ENCODE measurements at regions of chr16 and their contacts with region 1.

Region 1: GRCh38 chr16:57591086-57591869 is 37.2 kb upstream of the ADGRG1 start:
- DNase-seq: peak; percentile 30 to 72 (median 48)
- ATAC-seq: peak; percentile 70
- H3K4me3 ChIP-seq: peak overlapping the region; percentile 25
- H3K4me3 Mint-ChIP-seq: peak overlapping the region; percentile 9 to 83 (median 69)
- H3K27ac ChIP-seq: no peak overlapping the region
- H3K27ac Mint-ChIP-seq: peak overlapping the region; percentile 17 to 92 (median 75)
- H3K4me1 ChIP-seq: peaks cover 27 to 47% of the 10 kb centered on the region in 2 donors
- H3K4me1 Mint-ChIP-seq: peaks cover 26 to 43% (median 38%) of the 10 kb centered on the region in 7 donors
- H3K27me3 ChIP-seq: no peaks in the 10 kb centered on the region
- H3K27me3 Mint-ChIP-seq: peaks cover 0 to 2% (median 0%) of the 10 kb centered on the region in 5 donors

Region 2: GRCh38 chr16:57386381-57386951 is 204.8 kb before region 1 on chr16:
- CTCF ChIA-PET with region 1: no interaction called
- POLR2A ChIA-PET with region 1: no interaction called
- intact Hi-C with region 1: no loop called
- DNase-seq: no peak
- ATAC-seq: no peak
- H3K4me3 ChIP-seq: no peak overlapping the region
- H3K4me3 Mint-ChIP-seq: no peak overlapping the region
- H3K27ac ChIP-seq: no peak overlapping the region
- H3K27ac Mint-ChIP-seq: no peak overlapping the region
- H3K4me1 ChIP-seq: no peaks in the 10 kb centered on the region
- H3K4me1 Mint-ChIP-seq: peaks cover 0 to 5% (median 0%) of the 10 kb centered on the region in 7 donors
- H3K27me3 ChIP-seq: no peaks in the 10 kb centered on the region
- H3K27me3 Mint-ChIP-seq: peaks cover 0 to 4% (median 0%) of the 10 kb centered on the region in 5 donors

Region 3: DNA sequence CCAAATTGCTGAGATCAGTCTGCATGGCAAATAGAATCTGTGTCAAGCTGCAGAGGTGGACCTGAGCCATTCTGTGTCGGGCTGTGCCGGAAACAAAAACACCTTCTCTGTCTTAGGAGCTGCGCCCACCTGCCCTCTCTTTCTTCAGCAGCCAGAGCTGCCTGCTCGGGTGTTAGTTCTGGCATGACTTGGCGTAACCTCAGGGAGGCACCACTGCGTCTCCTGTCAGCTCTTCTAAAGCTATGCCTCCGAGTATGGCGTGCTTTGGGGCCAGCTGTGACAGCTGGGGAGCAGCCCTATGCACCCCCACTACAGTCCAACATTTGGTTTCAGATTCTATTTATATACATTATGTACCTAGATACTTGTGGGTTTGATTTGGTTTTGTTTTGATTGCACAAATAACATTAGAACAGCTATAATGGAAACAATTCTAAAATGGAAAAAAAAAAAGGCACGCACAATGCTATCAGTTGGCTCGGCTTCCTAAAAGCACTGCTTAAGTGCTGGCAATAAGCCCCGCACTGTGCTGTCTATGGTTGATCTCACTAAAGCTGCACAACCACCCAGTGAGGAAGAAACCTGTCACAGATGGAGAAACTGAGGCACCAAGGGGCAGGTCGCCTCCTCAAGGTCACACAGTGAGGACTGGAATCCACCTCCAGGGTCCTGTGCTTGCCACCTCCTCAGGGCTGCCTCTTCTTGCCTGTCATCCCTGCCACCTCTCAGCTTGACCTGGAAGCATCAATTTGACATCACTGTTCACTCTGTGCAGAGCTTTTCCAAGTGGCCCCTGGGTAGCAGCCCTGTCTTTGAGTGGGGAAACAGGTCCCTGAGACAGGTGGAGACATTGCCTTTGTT is 18.5 kb after region 1 on chr16:
- CTCF ChIA-PET with region 1: interaction called, 3 read pairs
- POLR2A ChIA-PET with region 1: interaction called, 3 read pairs
- intact Hi-C with region 1: loop called (anchors 1 to 2 kb)
- DNase-seq: peak in 7 of 9 donors; percentile 29 to 74 (median 35)
- ATAC-seq: peak; percentile 91
- H3K4me3 ChIP-seq: peak overlapping the region; percentile 38
- H3K4me3 Mint-ChIP-seq: peak overlapping the region; percentile 38 to 84 (median 62)
- H3K27ac ChIP-seq: no peak overlapping the region
- H3K27ac Mint-ChIP-seq: peak overlapping the region in 8 of 9 donors; percentile 20 to 91 (median 52)
- H3K4me1 ChIP-seq: peaks cover 10 to 42% of the 10 kb centered on the region in 2 donors
- H3K4me1 Mint-ChIP-seq: peaks cover 11 to 47% (median 13%) of the 10 kb centered on the region in 7 donors
- H3K27me3 ChIP-seq: no peaks in the 10 kb centered on the region
- H3K27me3 Mint-ChIP-seq: no peaks in the 10 kb centered on the region

Region 4: GRCh38 chr16:57648590-57649442 is 57.5 kb after region 1 on chr16:
- CTCF ChIA-PET with region 1: interaction called, 53 read pairs
- POLR2A ChIA-PET with region 1: no interaction called
- intact Hi-C with region 1: loop called (anchors 1 kb)
- DNase-seq: peak; percentile 63 to 90 (median 80)
- ATAC-seq: peak; percentile 90
- H3K4me3 ChIP-seq: no peak overlapping the region
- H3K4me3 Mint-ChIP-seq: peak overlapping the region in 2 of 10 donors; percentile 7 to 77
- H3K27ac ChIP-seq: no peak overlapping the region
- H3K27ac Mint-ChIP-seq: peak overlapping the region in 5 of 9 donors; percentile 11 to 66 (median 59)
- H3K4me1 ChIP-seq: peaks cover 0 to 29% of the 10 kb centered on the region in 2 donors
- H3K4me1 Mint-ChIP-seq: peaks cover 6 to 33% (median 15%) of the 10 kb centered on the region in 7 donors
- H3K27me3 ChIP-seq: no peaks in the 10 kb centered on the region
- H3K27me3 Mint-ChIP-seq: no peaks in the 10 kb centered on the region

Region 5: GRCh38 chr16:57720142-57720575 is 128.9 kb after region 1 on chr16:
- CTCF ChIA-PET with region 1: no interaction called
- POLR2A ChIA-PET with region 1: no interaction called
- intact Hi-C with region 1: loop called (anchors 1 to 2 kb)
- DNase-seq: peak in 5 of 9 donors; percentile 21 to 40 (median 25)
- ATAC-seq: peak; percentile 75
- H3K4me3 ChIP-seq: no peak overlapping the region
- H3K4me3 Mint-ChIP-seq: no peak overlapping the region
- H3K27ac ChIP-seq: no peak overlapping the region
- H3K27ac Mint-ChIP-seq: no peak overlapping the region
- H3K4me1 ChIP-seq: no peaks in the 10 kb centered on the region
- H3K4me1 Mint-ChIP-seq: no peaks in the 10 kb centered on the region
- H3K27me3 ChIP-seq: no peaks in the 10 kb centered on the region
- H3K27me3 Mint-ChIP-seq: peaks cover 0 to 2% (median 0%) of the 10 kb centered on the region in 5 donors

Region 6: DNA sequence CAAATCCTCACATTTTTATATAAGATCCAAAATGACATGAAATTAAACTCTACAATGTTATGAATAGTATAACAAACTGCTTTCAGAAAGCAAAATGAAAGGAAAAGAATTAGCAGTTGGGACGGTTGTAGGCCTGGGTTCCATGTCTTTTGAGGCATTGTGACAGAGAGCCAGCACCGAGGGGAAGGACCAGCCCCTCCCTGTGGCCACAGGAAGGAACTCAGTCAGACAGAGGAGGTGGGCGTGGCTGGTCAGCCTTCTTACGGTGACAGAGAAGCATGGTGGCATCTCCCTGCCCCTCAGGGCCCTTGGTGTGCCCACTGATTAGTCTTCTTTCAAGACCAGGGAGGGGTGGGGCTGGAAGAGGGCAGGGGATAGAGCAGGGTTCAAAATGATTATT is 403.5 kb after region 1 on chr16:
- CTCF ChIA-PET with region 1: no interaction called
- POLR2A ChIA-PET with region 1: no interaction called
- intact Hi-C with region 1: loop called in 1 of 2 experiments (anchors 5 kb)
- DNase-seq: peak in 1 of 9 donors; percentile 20
- ATAC-seq: peak; percentile 72
- H3K4me3 ChIP-seq: no peak overlapping the region
- H3K4me3 Mint-ChIP-seq: peak overlapping the region in 5 of 10 donors; percentile 1 to 41 (median 19)
- H3K27ac ChIP-seq: peak overlapping the region; percentile 46
- H3K27ac Mint-ChIP-seq: peak overlapping the region in 8 of 9 donors; percentile 72 to 90 (median 84)
- H3K4me1 ChIP-seq: peaks cover 43 to 55% of the 10 kb centered on the region in 2 donors
- H3K4me1 Mint-ChIP-seq: peaks cover 33 to 59% (median 41%) of the 10 kb centered on the region in 7 donors
- H3K27me3 ChIP-seq: no peaks in the 10 kb centered on the region
- H3K27me3 Mint-ChIP-seq: no peaks in the 10 kb centered on the region

Measured in naive thymus-derived CD4-positive, alpha-beta T cell (primary cell).